HepG2 (cell line): ENCODE measurements at regions of chr9 and their contacts with region 1.

Region 1: GRCh38 chr9:73200694-73201452 is 49.2 kb downstream of the ANXA1 start:
- DNase-seq: peak; percentile 33
- ATAC-seq: peak; percentile 57
- H3K4me3 ChIP-seq: no peak overlapping the region
- H3K27ac ChIP-seq: no peak overlapping the region
- H3K4me1 ChIP-seq: no peaks in the 10 kb centered on the region
- H3K27me3 ChIP-seq: no peaks in the 10 kb centered on the region
- CTCF ChIP-seq: peak; percentile 54
- EP300 ChIP-seq: no peak
- POLR2A ChIP-seq: no peak
- RAD21 ChIP-seq: no peak

Region 2: GRCh38 chr9:73104342-73104741 is 96.5 kb before region 1 on chr9:
- CTCF ChIA-PET with region 1: no interaction called
- POLR2A ChIA-PET with region 1: no interaction called
- in situ Hi-C with region 1: no loop called
- intact Hi-C with region 1: loop called (anchors 5 kb)
- DNase-seq: no peak
- ATAC-seq: no peak
- H3K4me3 ChIP-seq: no peak overlapping the region
- H3K27ac ChIP-seq: no peak overlapping the region
- H3K4me1 ChIP-seq: no peaks in the 10 kb centered on the region
- H3K27me3 ChIP-seq: no peaks in the 10 kb centered on the region; a peak in 1 of 5 replicates
- CTCF ChIP-seq: no peak
- EP300 ChIP-seq: no peak
- POLR2A ChIP-seq: no peak
- RAD21 ChIP-seq: no peak

Region 3: DNA sequence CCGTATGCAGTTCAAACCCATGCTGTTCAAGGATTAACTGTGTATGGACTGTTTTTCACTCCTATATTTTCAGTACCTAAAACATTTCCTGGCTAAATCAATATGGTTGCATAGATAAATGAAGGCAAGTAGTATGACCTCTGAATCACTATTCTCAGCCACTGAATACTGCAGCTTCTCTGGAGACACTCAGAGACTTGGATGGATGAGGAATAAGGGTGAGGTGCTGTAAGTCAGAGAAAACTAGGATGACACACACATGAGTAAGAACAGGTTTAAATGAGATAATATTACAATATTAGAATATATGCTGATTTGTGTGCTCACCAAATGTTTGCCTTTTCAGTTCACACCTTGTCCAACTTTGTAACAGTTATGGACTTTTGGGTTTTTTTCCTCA is 75.2 kb before region 1 on chr9:
- CTCF ChIA-PET with region 1: no interaction called
- POLR2A ChIA-PET with region 1: no interaction called
- in situ Hi-C with region 1: no loop called
- intact Hi-C with region 1: no loop called
- DNase-seq: no peak
- ATAC-seq: no peak
- H3K4me3 ChIP-seq: no peak overlapping the region
- H3K27ac ChIP-seq: no peak overlapping the region
- H3K4me1 ChIP-seq: no peaks in the 10 kb centered on the region
- H3K27me3 ChIP-seq: no peaks in the 10 kb centered on the region
- CTCF ChIP-seq: no peak
- EP300 ChIP-seq: no peak
- POLR2A ChIP-seq: no peak
- RAD21 ChIP-seq: no peak

Region 4: DNA sequence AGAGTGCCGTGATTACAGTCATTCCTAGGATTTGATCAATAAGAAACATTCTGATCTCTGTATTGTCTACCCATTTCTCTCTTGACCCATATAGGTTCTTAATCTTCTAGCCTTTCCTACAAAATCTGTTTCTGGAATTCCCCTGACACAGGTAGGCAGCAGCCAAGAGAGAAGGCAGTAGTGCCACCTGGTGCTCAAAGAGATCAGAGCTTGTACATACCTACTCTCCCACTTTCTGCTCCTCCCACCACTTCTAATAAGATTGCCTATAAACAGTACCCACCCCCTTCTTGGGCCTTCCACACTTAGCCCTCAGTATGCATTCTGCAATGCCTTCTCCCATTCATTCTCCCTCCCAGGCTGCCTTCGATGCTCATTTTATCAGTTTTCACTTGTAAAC is 1178.8 kb after region 1 on chr9:
- CTCF ChIA-PET with region 1: no interaction called
- POLR2A ChIA-PET with region 1: no interaction called
- in situ Hi-C with region 1: no loop called
- intact Hi-C with region 1: loop called (anchors 2 kb)
- DNase-seq: peak; percentile 40
- ATAC-seq: peak; percentile 94
- H3K4me3 ChIP-seq: no peak overlapping the region
- H3K27ac ChIP-seq: no peak overlapping the region
- H3K4me1 ChIP-seq: no peaks in the 10 kb centered on the region
- H3K27me3 ChIP-seq: no peaks in the 10 kb centered on the region
- CTCF ChIP-seq: peak; percentile 72
- EP300 ChIP-seq: no peak
- POLR2A ChIP-seq: no peak
- RAD21 ChIP-seq: 0 out of 2 replicates have a peak, but pooled peaks have one; percentile 43